ENCODE measurements at regions of chr17 and their contacts with region 1.

Region 1: GRCh38 chr17:8189711-8190477 is at the start of gene BORCS6:
- DNase-seq: peak; percentile 95
- ATAC-seq: peak; percentile 56
- H3K4me3 Mint-ChIP-seq: no peak within 1 kb of the TSS
- H3K27ac Mint-ChIP-seq: peak within 1 kb of the TSS; percentile 78
- H3K4me1 Mint-ChIP-seq: peaks cover 7% of the 10 kb centered on the region
- H3K27me3 Mint-ChIP-seq: no peaks in the 10 kb centered on the region; the same call in 1 of the 2 replicates
- CTCF ChIP-seq: no peak
- total RNA-seq, gene BORCS6: 5.0 to 5.6 TPM (median 5.1 TPM) in 3 replicates

Region 2: GRCh38 chr17:8209909-8210760 is 20.2 kb after region 1 on chr17 and contains the start of gene AURKB:
- CTCF ChIA-PET with region 1: interaction called, 4 read pairs
- POLR2A ChIA-PET with region 1: interaction called, 16 read pairs
- DNase-seq: peak; percentile 95
- ATAC-seq: peak; percentile 91
- H3K4me3 Mint-ChIP-seq: peak within 1 kb of the TSS; percentile 89
- H3K27ac Mint-ChIP-seq: peak within 1 kb of the TSS; percentile 96
- H3K4me1 Mint-ChIP-seq: peaks cover 16% of the 10 kb centered on the region
- H3K27me3 Mint-ChIP-seq: no peaks in the 10 kb centered on the region
- CTCF ChIP-seq: no peak
- total RNA-seq, gene AURKB: 180 to 215 TPM (median 183 TPM) in 3 replicates